ENCODE measurements at regions of chr19 and their contacts with region 1.

Region 1: DNA sequence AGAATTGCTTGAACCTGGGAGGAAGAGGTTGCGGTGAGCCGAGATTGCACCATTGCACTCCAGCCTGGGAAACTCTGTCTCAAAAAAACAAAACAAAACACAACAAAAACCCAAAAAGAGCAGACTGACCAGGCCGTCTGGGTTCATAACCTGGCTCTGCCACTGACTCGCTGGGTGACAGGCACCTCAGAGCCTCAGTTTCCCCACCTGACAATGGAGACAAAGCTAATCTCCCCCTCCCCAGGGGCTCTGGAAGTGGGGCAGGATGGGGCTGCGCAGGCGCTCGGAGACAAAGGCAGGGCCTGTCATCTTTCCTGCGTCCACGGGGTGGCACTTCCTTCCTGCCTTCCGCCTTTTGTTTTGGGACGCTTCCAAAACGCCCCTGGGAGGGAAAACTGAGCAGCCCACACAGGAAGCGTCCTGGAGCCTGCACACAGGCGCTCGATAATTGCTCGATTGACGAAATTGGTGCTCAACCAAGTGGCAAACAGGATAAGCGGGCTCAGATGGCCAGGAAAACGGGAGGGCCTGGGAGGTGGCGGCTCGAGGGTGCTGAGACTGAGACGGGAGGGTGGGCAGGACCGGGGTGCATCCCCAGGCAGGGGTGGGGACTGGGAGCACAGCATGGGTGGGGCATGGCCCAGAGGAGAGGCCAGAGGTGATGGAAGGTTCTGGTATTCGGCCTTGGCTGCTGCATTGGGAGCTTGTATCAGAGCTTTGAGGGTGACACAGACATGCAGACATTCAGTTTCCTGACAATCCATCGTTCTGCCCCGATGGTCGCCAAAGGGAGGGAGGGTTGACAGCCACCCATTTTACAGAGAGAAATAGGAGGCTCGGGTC is 17.8 kb downstream of the SPC24 start:
- DNase-seq: peak; percentile 82 to 93 (median 87)
- ATAC-seq: peak; percentile 58
- H3K4me3 ChIP-seq: peak overlapping the region; percentile 4 to 16
- H3K27ac ChIP-seq: peak overlapping the region; percentile 76 to 84
- H3K4me1 ChIP-seq: peaks cover 31 to 66% of the 10 kb centered on the region in 2 donors
- H3K27me3 ChIP-seq: no peaks in the 10 kb centered on the region
- CTCF ChIP-seq: peak; percentile 66 to 80

Region 2: DNA sequence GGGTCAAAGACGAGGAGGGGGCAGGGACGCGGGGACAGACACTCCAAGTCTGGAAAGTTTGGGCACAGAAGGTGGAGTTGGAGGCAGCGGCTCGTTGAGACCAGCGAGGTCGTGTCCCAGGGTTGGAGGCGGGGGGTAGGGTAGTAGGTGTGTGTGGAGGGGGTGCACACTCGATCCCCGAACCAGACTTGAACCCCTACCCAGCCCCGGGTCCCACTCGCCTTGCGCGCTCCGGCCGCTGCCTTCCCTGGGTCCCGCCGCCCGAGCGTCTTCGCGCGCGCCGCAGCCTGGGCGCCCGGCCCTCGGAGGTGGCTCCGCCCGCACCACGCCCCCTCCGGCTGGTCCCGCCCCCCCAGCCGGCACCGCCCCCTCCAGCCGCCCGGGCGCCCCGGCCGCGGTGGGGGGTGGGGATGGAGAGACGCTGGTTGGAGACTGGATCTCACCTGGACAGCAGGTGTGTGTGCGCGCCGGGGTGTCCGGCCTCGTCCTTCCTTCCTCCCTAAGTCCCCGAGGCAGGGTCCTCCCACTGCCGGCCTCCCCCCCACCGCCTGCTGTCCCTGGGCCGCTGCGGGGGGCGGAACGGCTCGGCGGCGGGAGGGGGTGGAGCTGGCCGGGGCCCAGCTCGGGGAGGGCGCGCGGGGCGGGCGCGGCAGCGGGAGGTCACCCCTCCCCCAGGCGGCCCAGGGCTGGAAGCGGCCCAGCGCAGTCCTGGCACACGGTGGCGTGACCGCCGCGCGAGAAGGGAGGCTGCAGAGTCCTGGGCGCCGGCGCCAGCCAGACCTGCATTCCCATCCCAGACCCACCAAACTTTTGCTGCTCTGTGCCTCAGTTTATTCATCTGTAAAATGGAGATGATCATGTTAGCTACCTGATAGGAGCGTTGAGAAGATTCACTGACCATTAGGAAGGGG is 59.8 kb after region 1 on chr19 and contains the start of gene KANK2:
- intact Hi-C with region 1: loop called (anchors 2 to 10 kb)
- DNase-seq: peak; percentile 85 to 94 (median 88)
- ATAC-seq: peak; percentile 93
- H3K4me3 ChIP-seq: peak within 1 kb of the TSS; percentile 45 to 56
- H3K27ac ChIP-seq: peak within 1 kb of the TSS; percentile 38 to 81
- H3K4me1 ChIP-seq: peaks cover 14 to 43% of the 10 kb centered on the region in 2 donors
- H3K27me3 ChIP-seq: peaks cover 0 to 10% of the 10 kb centered on the region in 2 donors
- CTCF ChIP-seq: no peak
- polyA plus RNA-seq, gene KANK2: 239 to 286 (median 268) TPM

Region 3: GRCh38 chr19:11203194-11204075 is 65.7 kb after region 1 on chr19:
- intact Hi-C with region 1: loop called (anchors 2 to 10 kb)
- DNase-seq: peak; percentile 79 to 94 (median 86)
- ATAC-seq: peak; percentile 78
- H3K4me3 ChIP-seq: no peak overlapping the region
- H3K27ac ChIP-seq: peak overlapping the region; percentile 28 to 62
- H3K4me1 ChIP-seq: peaks cover under 1 to 20% of the 10 kb centered on the region in 2 donors
- H3K27me3 ChIP-seq: no peaks in the 10 kb centered on the region
- CTCF ChIP-seq: peak; percentile 75 to 80

Region 4: GRCh38 chr19:11288343-11288742 is 150.6 kb after region 1 on chr19:
- intact Hi-C with region 1: loop called in 1 of 2 experiments (anchors 10 kb)
- DNase-seq: no peak
- ATAC-seq: peak; percentile 14
- H3K4me3 ChIP-seq: no peak overlapping the region
- H3K27ac ChIP-seq: no peak overlapping the region
- H3K4me1 ChIP-seq: peaks cover 0 to 23% of the 10 kb centered on the region in 2 donors
- H3K27me3 ChIP-seq: peaks cover 0 to 12% of the 10 kb centered on the region in 2 donors
- CTCF ChIP-seq: peak in 1 of 2 donors; percentile 28

Measured in left lung (tissue), 14 donors.